ENCODE measurements at regions of chrX and their contacts with region 1.

Region 1: GRCh38 chrX:63421411-63421810 is 70.3 kb upstream of the SPIN4 start:
- DNase-seq: no peak
- ATAC-seq: no peak
- H3K4me3 ChIP-seq: no peak overlapping the region
- H3K27ac ChIP-seq: no peak overlapping the region
- H3K4me1 ChIP-seq: peaks cover 31% of the 10 kb centered on the region
- H3K27me3 ChIP-seq: no peaks in the 10 kb centered on the region
- CTCF ChIP-seq: peak; percentile 44; the same call in 1 of the 2 replicates

Region 2: DNA sequence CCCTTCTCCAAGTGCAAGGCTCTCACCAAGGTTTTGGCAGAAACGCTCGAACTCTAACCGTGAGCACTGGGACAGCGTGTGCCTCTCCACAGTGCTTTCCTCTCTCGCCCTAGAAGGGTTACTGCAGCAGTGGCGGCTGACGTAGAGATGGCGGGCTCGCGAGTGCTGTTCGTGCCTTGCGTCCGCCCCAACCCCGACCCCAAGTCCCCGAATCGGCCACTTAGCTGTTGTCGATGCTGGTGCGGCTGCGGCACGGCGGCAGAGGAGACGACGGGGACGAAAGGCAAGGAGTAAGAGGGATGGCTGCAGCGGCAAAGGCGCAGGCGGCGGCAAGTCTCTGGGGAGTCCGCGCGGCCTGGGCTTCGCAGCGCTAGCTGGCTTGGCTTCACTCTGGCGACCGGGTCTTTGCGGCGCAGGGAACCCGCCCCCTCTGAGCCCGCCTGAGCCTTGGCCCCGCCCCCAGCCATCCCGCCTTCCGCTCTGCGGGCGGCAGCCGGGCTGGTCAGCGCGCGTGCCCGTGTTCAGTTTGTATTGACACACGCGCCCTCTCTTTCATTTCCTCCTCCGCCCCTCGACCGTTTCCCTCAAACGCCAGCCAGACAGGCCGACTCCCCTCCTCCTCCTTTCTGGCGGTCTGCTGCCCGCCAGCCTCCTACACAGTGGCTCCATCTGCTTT is 70.3 kb before region 1 on chrX and contains the start of gene SPIN4:
- CTCF ChIA-PET with region 1: no interaction called
- POLR2A ChIA-PET with region 1: no interaction called
- intact Hi-C with region 1: loop called (anchors 5 kb)
- DNase-seq: peak; percentile 89
- ATAC-seq: peak; percentile 94
- H3K4me3 ChIP-seq: peak within 1 kb of the TSS; percentile 96
- H3K27ac ChIP-seq: peak within 1 kb of the TSS; percentile 63
- H3K4me1 ChIP-seq: peaks cover 14% of the 10 kb centered on the region; the same call in 1 of the 2 replicates
- H3K27me3 ChIP-seq: no peaks in the 10 kb centered on the region
- CTCF ChIP-seq: no peak
- total RNA-seq, gene SPIN4: 9.0 and 12.1 TPM in 2 replicates

Measured in PC-3 (cell line).